ENCODE measurements at regions of chr1 and their contacts with region 1.

Region 1: GRCh38 chr1:40078512-40079333 is 18.3 kb downstream of the PPT1 start:
- DNase-seq: peak; percentile 41
- ATAC-seq: peak; percentile 89
- H3K4me3 ChIP-seq: no peak overlapping the region
- H3K27ac ChIP-seq: no peak overlapping the region
- H3K4me1 ChIP-seq: no peaks in the 10 kb centered on the region
- H3K27me3 ChIP-seq: no peaks in the 10 kb centered on the region
- CTCF ChIP-seq: peak; percentile 63 to 81 (median 71); a peak in 5 of 6 replicates
- POLR2A ChIP-seq: no peak
- RAD21 ChIP-seq: peak; percentile 70

Region 2: GRCh38 chr1:39469150-39469549 is 609.6 kb before region 1 on chr1:
- CTCF ChIA-PET with region 1: no interaction called
- POLR2A ChIA-PET with region 1: no interaction called
- RAD21 ChIA-PET with region 1: no interaction called
- intact Hi-C with region 1: no loop called
- DNase-seq: no peak
- ATAC-seq: no peak
- H3K4me3 ChIP-seq: no peak overlapping the region
- H3K27ac ChIP-seq: no peak overlapping the region
- H3K4me1 ChIP-seq: no peaks in the 10 kb centered on the region
- H3K27me3 ChIP-seq: no peaks in the 10 kb centered on the region
- CTCF ChIP-seq: no peak
- POLR2A ChIP-seq: no peak
- RAD21 ChIP-seq: 0 out of 2 replicates have a peak, but pooled peaks have one; percentile 7

Region 3: GRCh38 chr1:40204856-40205255 is 126.1 kb after region 1 on chr1:
- CTCF ChIA-PET with region 1: no interaction called
- POLR2A ChIA-PET with region 1: no interaction called
- RAD21 ChIA-PET with region 1: no interaction called
- intact Hi-C with region 1: no loop called
- DNase-seq: no peak
- ATAC-seq: no peak
- H3K4me3 ChIP-seq: no peak overlapping the region
- H3K27ac ChIP-seq: no peak overlapping the region
- H3K4me1 ChIP-seq: no peaks in the 10 kb centered on the region
- H3K27me3 ChIP-seq: no peaks in the 10 kb centered on the region
- CTCF ChIP-seq: no peak
- POLR2A ChIP-seq: no peak
- RAD21 ChIP-seq: no peak

Region 4: DNA sequence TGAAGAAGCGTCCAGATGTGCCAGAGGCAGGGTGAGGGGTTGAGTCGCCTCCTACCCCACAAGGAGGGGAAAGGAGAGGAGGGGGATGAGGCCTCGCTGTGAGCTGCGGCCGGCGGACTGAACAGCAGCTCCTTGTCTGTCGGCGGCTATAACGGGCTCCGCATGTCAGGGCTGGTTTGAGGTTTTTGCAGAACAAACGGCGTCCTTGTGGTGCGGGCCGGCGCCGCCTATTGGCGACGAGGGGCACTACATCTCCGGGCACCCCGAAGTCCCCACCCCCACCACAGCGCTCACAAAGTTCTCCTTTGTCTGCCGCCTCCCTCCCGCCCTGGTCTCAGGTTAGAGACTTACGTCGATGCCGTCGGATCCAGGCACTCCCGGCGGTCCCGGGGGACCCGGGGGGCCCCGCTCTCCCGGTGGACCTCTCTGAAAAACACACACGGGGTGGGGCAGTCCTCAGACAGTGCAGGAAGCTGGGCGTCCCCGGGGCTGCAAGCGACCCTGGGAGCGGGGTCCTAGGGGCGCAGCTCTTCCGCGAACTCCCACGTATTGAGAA is 236.6 kb after region 1 on chr1:
- CTCF ChIA-PET with region 1: interaction called, 4 read pairs
- POLR2A ChIA-PET with region 1: no interaction called
- RAD21 ChIA-PET with region 1: no interaction called
- intact Hi-C with region 1: loop called (anchors 5 kb)
- DNase-seq: peak; percentile 73
- ATAC-seq: peak; percentile 75
- H3K4me3 ChIP-seq: peak overlapping the region; percentile 47 to 54
- H3K27ac ChIP-seq: peak overlapping the region; percentile 35; the same call in 1 of the 2 replicates
- H3K4me1 ChIP-seq: peaks cover 6 to 36% of the 10 kb centered on the region in 2 experiments; a peak in 3 of 4 replicates
- H3K27me3 ChIP-seq: no peaks in the 10 kb centered on the region
- CTCF ChIP-seq: peak; percentile 68 to 93 (median 80); a peak in 5 of 6 replicates
- POLR2A ChIP-seq: no peak
- RAD21 ChIP-seq: peak; percentile 75

Region 5: GRCh38 chr1:40404670-40405462 is 326.1 kb after region 1 on chr1:
- CTCF ChIA-PET with region 1: interaction called, 7 read pairs
- POLR2A ChIA-PET with region 1: no interaction called
- RAD21 ChIA-PET with region 1: no interaction called
- intact Hi-C with region 1: loop called (anchors 2 kb)
- DNase-seq: peak; percentile 51
- ATAC-seq: peak; percentile 79
- H3K4me3 ChIP-seq: no peak overlapping the region
- H3K27ac ChIP-seq: no peak overlapping the region
- H3K4me1 ChIP-seq: no peaks in the 10 kb centered on the region
- H3K27me3 ChIP-seq: no peaks in the 10 kb centered on the region
- CTCF ChIP-seq: peak; percentile 72 to 86 (median 79)
- POLR2A ChIP-seq: no peak
- RAD21 ChIP-seq: peak; percentile 85

Measured in HCT116 (cell line).